CD8-positive, alpha-beta T cell (primary cell): ENCODE measurements at regions of chr1 and their contacts with region 1.

Region 1: GRCh38 chr1:25971066-25971810 is 26.6 kb downstream of the PAFAH2 start:
- DNase-seq: peak in 4 of 9 experiments; percentile 22 to 61 (median 40)
- ATAC-seq: peak; percentile 75
- H3K4me3 ChIP-seq: no peak overlapping the region
- H3K4me3 Mint-ChIP-seq: peak overlapping the region; percentile 56
- H3K27ac ChIP-seq: peak overlapping the region in 1 of 2 experiments; percentile 55
- H3K27ac Mint-ChIP-seq: peak overlapping the region; percentile 88
- H3K4me1 ChIP-seq: peaks cover 20% of the 10 kb centered on the region
- H3K4me1 Mint-ChIP-seq: peaks cover 31% of the 10 kb centered on the region
- H3K27me3 ChIP-seq: no peaks in the 10 kb centered on the region
- H3K27me3 Mint-ChIP-seq: no peaks in the 10 kb centered on the region
- CTCF ChIP-seq: no peak

Region 2: GRCh38 chr1:25648681-25649440 is 322.4 kb before region 1 on chr1:
- CTCF ChIA-PET with region 1: no interaction called
- POLR2A ChIA-PET with region 1: no interaction called
- intact Hi-C with region 1: no loop called
- DNase-seq: peak in 1 of 9 experiments; percentile 37
- ATAC-seq: no peak
- H3K4me3 ChIP-seq: no peak overlapping the region
- H3K4me3 Mint-ChIP-seq: no peak overlapping the region
- H3K27ac ChIP-seq: no peak overlapping the region
- H3K27ac Mint-ChIP-seq: peak overlapping the region; percentile 56
- H3K4me1 ChIP-seq: peaks cover 38% of the 10 kb centered on the region
- H3K4me1 Mint-ChIP-seq: peaks cover 67% of the 10 kb centered on the region
- H3K27me3 ChIP-seq: no peaks in the 10 kb centered on the region
- H3K27me3 Mint-ChIP-seq: no peaks in the 10 kb centered on the region
- CTCF ChIP-seq: no peak

Region 3: DNA sequence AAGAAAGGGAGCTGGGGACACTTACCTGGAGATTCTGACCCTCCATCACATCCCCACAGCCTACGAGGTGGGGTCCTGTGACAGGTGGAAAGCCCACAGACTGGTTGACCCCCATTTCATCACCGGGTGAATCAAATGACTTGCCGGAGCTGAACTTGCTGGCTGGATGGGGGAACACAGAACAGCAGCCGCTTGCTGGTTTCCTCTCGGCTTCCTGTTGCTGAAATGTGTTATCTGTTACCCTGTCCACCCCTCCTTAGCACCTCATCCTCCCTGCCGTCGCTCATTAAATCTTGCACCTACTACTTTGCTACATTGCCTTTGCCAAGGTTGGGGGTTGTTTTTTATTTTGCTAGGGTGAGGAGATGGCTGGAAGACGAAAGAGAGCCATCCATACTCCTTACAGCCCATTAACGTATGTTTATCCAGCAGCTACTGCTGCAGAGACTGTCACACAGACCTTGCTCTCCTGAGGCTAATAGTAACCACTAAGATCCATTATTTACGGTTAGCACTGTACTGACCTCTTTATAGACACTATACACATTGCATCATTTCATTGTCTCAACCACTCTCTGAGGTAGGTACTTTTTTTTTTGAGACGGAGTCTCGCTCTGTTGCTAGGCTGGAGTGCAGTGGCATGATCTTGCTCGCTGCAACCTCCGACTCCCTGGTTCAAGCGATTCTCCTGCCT is 19.6 kb after region 1 on chr1:
- CTCF ChIA-PET with region 1: interaction called, 7 read pairs
- POLR2A ChIA-PET with region 1: interaction called, 16 read pairs
- intact Hi-C with region 1: no loop called
- DNase-seq: peak in 8 of 9 experiments; percentile 43 to 81 (median 58)
- ATAC-seq: peak; percentile 89
- H3K4me3 ChIP-seq: peak overlapping the region; percentile 59 to 62
- H3K4me3 Mint-ChIP-seq: peak overlapping the region; percentile 83
- H3K27ac ChIP-seq: peak overlapping the region; percentile 65 to 79
- H3K27ac Mint-ChIP-seq: peak overlapping the region; percentile 93
- H3K4me1 ChIP-seq: peaks cover 50% of the 10 kb centered on the region
- H3K4me1 Mint-ChIP-seq: peaks cover 75% of the 10 kb centered on the region
- H3K27me3 ChIP-seq: no peaks in the 10 kb centered on the region
- H3K27me3 Mint-ChIP-seq: no peaks in the 10 kb centered on the region
- CTCF ChIP-seq: no peak

Region 4: DNA sequence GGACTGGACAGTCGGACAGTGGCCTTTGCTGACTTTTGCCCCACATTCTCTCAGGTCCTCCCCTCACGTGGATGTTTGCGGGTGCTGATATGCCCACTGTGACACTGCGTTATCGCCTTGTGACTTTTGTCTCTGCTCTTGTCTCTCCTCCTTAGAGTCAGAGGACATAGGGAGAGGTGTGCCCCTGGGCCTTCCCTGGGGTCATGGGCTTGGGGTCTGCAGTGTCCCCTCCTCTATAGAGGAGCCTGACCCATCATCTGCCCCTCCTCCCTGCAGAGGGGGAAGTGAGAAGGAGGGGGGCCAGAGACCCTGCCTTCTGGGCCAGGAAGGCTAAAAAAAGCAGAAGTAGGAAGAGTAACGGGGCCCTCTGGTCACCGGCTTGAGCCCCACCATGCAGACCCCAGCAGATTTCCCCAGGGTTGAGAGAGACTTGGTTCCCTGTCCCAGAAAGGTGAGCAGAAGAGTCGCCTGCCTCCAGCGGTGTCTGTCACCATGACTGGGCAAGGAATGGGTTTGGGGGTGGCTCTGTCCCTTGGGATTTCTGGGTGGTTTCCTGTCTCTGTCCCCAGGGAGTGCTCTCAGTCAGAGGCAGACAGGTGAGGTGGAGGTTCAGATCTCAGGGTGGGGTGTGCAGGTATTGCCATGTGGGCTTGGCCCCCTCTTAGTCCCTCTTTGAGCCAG is 571.7 kb after region 1 on chr1:
- CTCF ChIA-PET with region 1: no interaction called
- POLR2A ChIA-PET with region 1: no interaction called
- intact Hi-C with region 1: no loop called
- DNase-seq: peak in 2 of 9 experiments; percentile 36 to 50
- ATAC-seq: no peak
- H3K4me3 ChIP-seq: peak overlapping the region; percentile 32 to 36
- H3K4me3 Mint-ChIP-seq: peak overlapping the region; percentile 81
- H3K27ac ChIP-seq: peak overlapping the region; percentile 56 to 85
- H3K27ac Mint-ChIP-seq: peak overlapping the region; percentile 97
- H3K4me1 ChIP-seq: peaks cover 93% of the 10 kb centered on the region
- H3K4me1 Mint-ChIP-seq: peaks cover 91% of the 10 kb centered on the region
- H3K27me3 ChIP-seq: no peaks in the 10 kb centered on the region
- H3K27me3 Mint-ChIP-seq: no peaks in the 10 kb centered on the region
- CTCF ChIP-seq: no peak